Activated T-helper 1 cell treated with anti-CD3 and anti-CD28 coated beads, Interleukin-12 subunit alpha, Interleukin-12 subunit beta, Interleukin-2, Interleukin-4 antibody, amounts not matched to agents 30 ng/mL and 10 ng/mL and 1 ng/mL, durations not matched to agents 14 hours and 24 hours and 36 hours (primary cell): ENCODE measurements at regions of chr12 and their contacts with region 1.

Region 1: GRCh38 chr12:116080415-116080814 is 197.1 kb downstream of the MED13L start:
- DNase-seq: no peak
- H3K4me3 Mint-ChIP-seq: no peak overlapping the region
- H3K27ac Mint-ChIP-seq: no peak overlapping the region
- H3K4me1 Mint-ChIP-seq: peaks cover 10% of the 10 kb centered on the region
- H3K27me3 Mint-ChIP-seq: no peaks in the 10 kb centered on the region

Region 2: GRCh38 chr12:115846516-115846915 is 233.9 kb before region 1 on chr12:
- intact Hi-C with region 1: no loop called
- DNase-seq: no peak
- H3K4me3 Mint-ChIP-seq: no peak overlapping the region
- H3K27ac Mint-ChIP-seq: no peak overlapping the region
- H3K4me1 Mint-ChIP-seq: no peaks in the 10 kb centered on the region
- H3K27me3 Mint-ChIP-seq: no peaks in the 10 kb centered on the region

Region 3: GRCh38 chr12:116066381-116067230 is 13.8 kb before region 1 on chr12:
- intact Hi-C with region 1: loop called (anchors 2 kb)
- DNase-seq: peak; percentile 30
- H3K4me3 Mint-ChIP-seq: no peak overlapping the region
- H3K27ac Mint-ChIP-seq: no peak overlapping the region
- H3K4me1 Mint-ChIP-seq: peaks cover 17% of the 10 kb centered on the region
- H3K27me3 Mint-ChIP-seq: no peaks in the 10 kb centered on the region

Region 4: GRCh38 chr12:116123451-116124258 is 43.2 kb after region 1 on chr12:
- intact Hi-C with region 1: loop called (anchors 5 kb)
- DNase-seq: peak; percentile 12
- H3K4me3 Mint-ChIP-seq: peak overlapping the region; percentile 25
- H3K27ac Mint-ChIP-seq: peak overlapping the region; percentile 6
- H3K4me1 Mint-ChIP-seq: peaks cover 53% of the 10 kb centered on the region
- H3K27me3 Mint-ChIP-seq: no peaks in the 10 kb centered on the region